ENCODE measurements at regions of chr14 and their contacts with region 1.

Region 1: DNA sequence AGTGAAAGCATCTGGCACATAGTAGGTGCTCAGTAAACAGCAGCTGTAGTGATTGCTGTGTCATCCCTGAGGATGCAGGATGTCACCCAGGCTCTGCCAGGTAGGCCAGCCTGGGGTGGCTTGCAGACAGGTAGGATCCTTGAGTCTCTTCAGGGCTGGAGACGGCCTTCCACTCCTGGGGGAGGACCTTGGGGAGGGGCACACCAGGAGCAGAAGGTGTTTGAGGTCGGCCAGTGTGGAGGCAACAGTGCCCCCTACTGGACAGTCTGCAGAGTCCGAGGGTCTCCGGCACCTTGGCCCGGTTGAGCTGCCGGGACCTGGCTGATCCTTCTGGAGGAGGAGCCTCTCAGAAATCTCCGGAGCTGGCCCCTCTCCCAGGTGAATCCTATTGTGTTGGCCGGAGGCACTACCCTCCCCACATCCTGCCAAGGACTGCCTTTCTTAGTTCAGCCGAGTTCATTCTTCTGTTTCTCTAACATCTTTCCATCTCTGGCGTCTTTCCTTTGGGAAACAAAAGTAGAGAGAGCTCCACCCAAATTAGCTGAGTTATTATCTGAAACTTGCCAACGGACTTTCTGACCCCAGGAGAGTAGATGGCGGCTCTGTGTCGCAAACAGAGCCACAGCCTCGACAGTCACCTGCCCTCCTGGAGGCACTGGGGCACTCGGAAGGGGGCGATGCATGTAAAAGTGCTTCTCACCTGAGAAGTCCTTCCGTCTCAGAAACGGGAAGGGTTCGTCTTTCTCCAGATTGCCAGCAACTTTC is 41.8 kb upstream of the CLMN start:
- DNase-seq: no peak
- ATAC-seq: peak; percentile 78
- H3K4me3 ChIP-seq: no peak overlapping the region
- H3K27ac ChIP-seq: no peak overlapping the region
- H3K4me1 ChIP-seq: peaks cover 7% of the 10 kb centered on the region
- H3K27me3 ChIP-seq: peaks cover 0 to 5% of the 10 kb centered on the region in 2 experiments; a peak in 3 of 4 replicates
- CTCF ChIP-seq: peak; percentile 53 to 78 (median 77)
- EP300 ChIP-seq: no peak
- POLR2A ChIP-seq: no peak
- RAD21 ChIP-seq: peak; percentile 62

Region 2: GRCh38 chr14:95206534-95206933 is 155.0 kb before region 1 on chr14:
- CTCF ChIA-PET with region 1: no interaction called
- POLR2A ChIA-PET with region 1: no interaction called
- RAD21 ChIA-PET with region 1: no interaction called
- SMC1A ChIA-PET with region 1: interaction called, 4 read pairs
- in situ Hi-C with region 1: no loop called
- intact Hi-C with region 1: loop called (anchors 5 kb)
- DNase-seq: no peak
- ATAC-seq: no peak; the same call in 2 of the 3 replicates
- H3K4me3 ChIP-seq: no peak overlapping the region
- H3K27ac ChIP-seq: no peak overlapping the region
- H3K4me1 ChIP-seq: peaks cover 7% of the 10 kb centered on the region; the same call in 1 of the 2 replicates
- H3K27me3 ChIP-seq: no peaks in the 10 kb centered on the region
- CTCF ChIP-seq: no peak
- EP300 ChIP-seq: no peak
- POLR2A ChIP-seq: no peak
- RAD21 ChIP-seq: no peak

Region 3: GRCh38 chr14:95327558-95328374 is 33.8 kb before region 1 on chr14:
- CTCF ChIA-PET with region 1: interaction called, 13 read pairs
- POLR2A ChIA-PET with region 1: no interaction called
- RAD21 ChIA-PET with region 1: interaction called, 6 read pairs
- SMC1A ChIA-PET with region 1: interaction called, 9 read pairs
- in situ Hi-C with region 1: no loop called
- intact Hi-C with region 1: loop called (anchors 2 kb)
- DNase-seq: peak; percentile 91
- ATAC-seq: peak; percentile 96
- H3K4me3 ChIP-seq: peak overlapping the region; percentile 46; the same call in 1 of the 2 replicates
- H3K27ac ChIP-seq: peak overlapping the region; percentile 77
- H3K4me1 ChIP-seq: peaks cover 22% of the 10 kb centered on the region
- H3K27me3 ChIP-seq: no peaks in the 10 kb centered on the region
- CTCF ChIP-seq: no peak
- EP300 ChIP-seq: peak; percentile 88 to 97
- POLR2A ChIP-seq: 0 out of 2 replicates have a peak, but pooled peaks have one; percentile 50
- RAD21 ChIP-seq: peak; percentile 22; the same call in 1 of the 2 replicates

Region 4: DNA sequence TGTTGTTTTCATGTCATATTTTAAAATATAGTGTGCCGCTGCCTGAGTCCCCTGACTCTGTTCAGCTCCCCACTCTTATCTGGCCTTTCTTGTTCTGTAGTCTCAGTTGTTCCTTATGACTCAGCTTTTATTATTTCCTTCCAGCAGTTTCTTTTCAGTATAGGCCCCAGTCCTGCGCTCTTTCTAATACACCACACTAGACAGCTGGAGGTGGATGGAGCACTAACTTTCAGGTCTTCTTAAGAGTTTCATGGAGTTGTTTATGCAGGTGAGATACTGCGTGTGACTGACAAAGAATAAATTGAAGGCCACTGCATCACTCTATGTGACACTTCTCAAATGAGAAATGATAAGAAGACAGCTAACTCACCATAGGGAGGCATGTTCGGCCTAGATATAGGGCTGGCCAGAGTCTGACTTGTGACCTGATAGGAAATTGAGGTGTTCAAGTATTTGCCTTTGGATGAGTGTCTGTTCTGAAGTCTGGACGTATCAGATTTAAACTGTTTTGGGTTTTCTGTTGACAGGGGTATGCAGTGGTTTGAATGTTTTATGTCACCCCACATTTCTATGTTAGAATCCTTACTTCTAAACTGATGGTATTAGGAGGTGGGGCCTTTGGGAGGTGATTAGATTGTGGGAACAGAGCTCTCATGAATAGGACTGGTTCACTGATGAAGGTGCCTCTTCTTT is 18.9 kb after region 1 on chr14:
- CTCF ChIA-PET with region 1: interaction called, 10 read pairs
- POLR2A ChIA-PET with region 1: no interaction called
- RAD21 ChIA-PET with region 1: no interaction called
- SMC1A ChIA-PET with region 1: interaction called, 4 read pairs
- in situ Hi-C with region 1: no loop called
- intact Hi-C with region 1: no loop called
- DNase-seq: no peak
- ATAC-seq: no peak
- H3K4me3 ChIP-seq: no peak overlapping the region
- H3K27ac ChIP-seq: no peak overlapping the region
- H3K4me1 ChIP-seq: no peaks in the 10 kb centered on the region
- H3K27me3 ChIP-seq: peaks cover 2% of the 10 kb centered on the region in 2 experiments; a peak in 2 of 4 replicates
- CTCF ChIP-seq: no peak
- EP300 ChIP-seq: no peak
- POLR2A ChIP-seq: no peak
- RAD21 ChIP-seq: no peak

Region 5: DNA sequence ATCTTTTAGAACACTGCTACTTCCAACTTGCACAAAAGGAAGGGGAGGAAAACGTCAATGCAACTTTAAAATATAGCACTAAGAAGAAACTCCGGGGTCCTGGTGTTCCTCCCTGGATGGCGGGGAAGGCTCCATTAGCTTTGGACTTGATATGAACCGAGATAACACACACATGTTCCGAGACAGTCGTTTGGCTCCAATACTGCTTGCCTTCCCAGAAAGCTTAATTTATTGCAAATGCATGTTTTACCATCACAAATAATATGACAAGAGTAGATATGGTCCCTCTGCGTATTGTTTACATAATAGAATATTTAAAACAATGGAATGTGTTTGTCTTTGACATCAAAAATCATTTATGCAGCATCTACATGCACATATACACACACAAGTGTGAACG is 45.8 kb after region 1 on chr14:
- CTCF ChIA-PET with region 1: no interaction called
- POLR2A ChIA-PET with region 1: no interaction called
- RAD21 ChIA-PET with region 1: no interaction called
- SMC1A ChIA-PET with region 1: no interaction called
- in situ Hi-C with region 1: no loop called
- intact Hi-C with region 1: no loop called
- DNase-seq: no peak
- ATAC-seq: no peak
- H3K4me3 ChIP-seq: no peak overlapping the region
- H3K27ac ChIP-seq: no peak overlapping the region
- H3K4me1 ChIP-seq: no peaks in the 10 kb centered on the region
- H3K27me3 ChIP-seq: no peaks in the 10 kb centered on the region
- CTCF ChIP-seq: no peak
- EP300 ChIP-seq: no peak
- POLR2A ChIP-seq: no peak
- RAD21 ChIP-seq: no peak